ENCODE measurements at regions of chr17 and their contacts with region 1.

Region 1: DNA sequence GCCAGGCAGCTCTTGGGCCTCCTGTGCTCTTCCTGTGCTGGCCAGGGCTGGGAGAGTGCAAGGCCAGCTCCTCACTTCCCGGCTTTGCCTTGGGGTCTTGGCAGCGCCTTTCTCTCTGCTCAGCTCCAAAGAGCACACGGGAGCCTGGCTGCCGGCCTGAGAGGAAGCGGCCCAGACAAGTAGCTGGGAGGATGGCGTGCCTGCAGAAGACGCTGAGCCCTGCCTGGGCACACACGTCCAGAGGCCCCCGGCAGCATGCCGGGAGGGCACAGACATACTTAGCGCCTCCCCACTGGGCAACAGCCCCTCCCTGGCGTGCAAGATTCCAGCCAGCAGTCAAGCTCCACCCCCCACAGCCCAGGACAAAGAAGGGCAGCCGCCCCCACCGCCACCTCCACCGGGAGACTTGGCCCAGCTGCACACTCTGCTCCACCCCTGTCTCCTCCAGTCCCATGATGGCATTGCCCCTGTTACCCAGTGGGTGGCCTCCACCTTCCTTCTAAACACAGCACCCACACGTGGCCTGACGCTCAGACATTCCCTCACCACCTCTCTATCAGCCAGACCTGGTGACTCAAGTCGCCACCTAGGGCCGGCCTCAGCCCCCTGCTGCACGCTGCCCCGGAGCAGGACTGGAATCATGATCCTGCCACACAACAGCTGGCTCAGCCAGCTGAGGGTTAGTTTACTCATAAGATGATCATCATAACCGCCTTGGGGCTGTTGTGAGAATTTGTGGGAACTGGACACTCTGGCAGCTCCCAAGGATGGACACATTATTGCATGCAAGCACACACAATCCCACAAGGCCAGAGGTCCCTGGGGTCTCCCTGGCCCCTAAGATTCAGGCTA is 12.4 kb downstream of the SGCA start:
- DNase-seq: peak; percentile 83 to 84
- ATAC-seq: peak; percentile 89

Region 2: DNA sequence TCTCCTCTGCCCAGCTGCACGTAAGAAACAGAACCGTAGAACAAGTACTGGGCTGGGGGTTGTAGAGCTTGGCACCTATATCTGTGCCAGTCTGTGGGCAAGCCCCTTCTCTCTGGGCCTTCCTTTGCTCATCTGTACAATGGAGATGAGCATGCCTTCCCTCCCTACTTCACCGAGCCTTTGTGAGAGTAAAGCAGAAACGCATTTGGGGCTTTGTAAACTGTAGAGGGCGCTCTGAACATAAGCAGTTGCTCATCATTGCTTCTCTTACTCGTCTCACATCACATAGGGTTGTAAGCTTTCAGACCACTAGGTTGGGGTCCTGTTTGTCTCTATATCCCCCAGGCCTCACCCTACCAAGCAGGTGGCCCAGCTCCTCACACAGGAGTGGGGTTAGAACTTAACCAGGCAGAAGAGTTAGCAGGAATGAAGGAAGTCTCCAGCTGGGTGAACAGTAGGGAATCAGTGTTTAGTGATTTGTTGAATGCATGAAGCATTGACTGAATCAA is 63.3 kb before region 1 on chr17:
- intact Hi-C with region 1: loop called in 1 of 2 experiments (anchors 10 kb)
- DNase-seq: no peak
- ATAC-seq: peak; percentile 18

Measured in left colon (tissue), 2 donors.